ENCODE measurements at regions of chr2 and their contacts with region 1.

Region 1: GRCh38 chr2:70779911-70780545 is 10.4 kb downstream of the FIGLA start:
- DNase-seq: no peak
- ATAC-seq: no peak
- H3K4me3 ChIP-seq: no peak overlapping the region
- H3K27ac ChIP-seq: no peak overlapping the region
- H3K4me1 ChIP-seq: no peaks in the 10 kb centered on the region
- H3K27me3 ChIP-seq: peaks cover 0 to 51% (median 22%) of the 10 kb centered on the region in 7 donors
- CTCF ChIP-seq: no peak

Region 2: DNA sequence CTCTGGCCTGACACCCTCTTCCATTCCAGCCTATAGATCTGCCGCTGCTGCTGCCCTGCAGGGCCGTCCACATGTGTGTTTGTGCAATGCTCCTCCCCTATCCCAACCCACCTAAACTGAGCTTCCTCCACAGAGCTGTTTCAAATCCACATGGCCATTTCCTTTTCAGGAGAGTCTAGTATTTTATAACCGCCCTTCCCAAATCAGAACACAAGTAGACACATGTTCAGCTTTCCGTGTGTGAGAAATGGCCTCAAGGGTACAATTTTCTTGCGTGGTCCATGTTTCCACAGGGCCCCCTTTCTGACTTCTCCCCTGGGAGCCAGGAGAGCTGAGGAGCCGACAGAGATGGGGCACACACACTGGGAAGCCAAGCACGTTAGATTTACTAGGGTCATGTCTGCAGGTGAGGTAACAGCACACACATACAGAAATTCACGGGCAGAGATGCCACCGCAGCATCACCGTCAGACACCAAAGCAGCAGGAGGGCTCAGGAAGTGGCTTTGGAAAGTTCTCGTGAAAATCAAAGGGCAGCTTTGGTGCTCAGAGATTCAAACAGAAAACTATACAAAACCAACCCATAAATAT is 123.5 kb before region 1 on chr2:
- intact Hi-C with region 1: loop called in 6 of 10 experiments (anchors 5 to 10 kb)
- DNase-seq: no peak
- ATAC-seq: no peak
- H3K4me3 ChIP-seq: no peak overlapping the region
- H3K27ac ChIP-seq: no peak overlapping the region
- H3K4me1 ChIP-seq: no peaks in the 10 kb centered on the region
- H3K27me3 ChIP-seq: peaks cover 0 to 52% (median 29%) of the 10 kb centered on the region in 7 donors
- CTCF ChIP-seq: no peak

Region 3: DNA sequence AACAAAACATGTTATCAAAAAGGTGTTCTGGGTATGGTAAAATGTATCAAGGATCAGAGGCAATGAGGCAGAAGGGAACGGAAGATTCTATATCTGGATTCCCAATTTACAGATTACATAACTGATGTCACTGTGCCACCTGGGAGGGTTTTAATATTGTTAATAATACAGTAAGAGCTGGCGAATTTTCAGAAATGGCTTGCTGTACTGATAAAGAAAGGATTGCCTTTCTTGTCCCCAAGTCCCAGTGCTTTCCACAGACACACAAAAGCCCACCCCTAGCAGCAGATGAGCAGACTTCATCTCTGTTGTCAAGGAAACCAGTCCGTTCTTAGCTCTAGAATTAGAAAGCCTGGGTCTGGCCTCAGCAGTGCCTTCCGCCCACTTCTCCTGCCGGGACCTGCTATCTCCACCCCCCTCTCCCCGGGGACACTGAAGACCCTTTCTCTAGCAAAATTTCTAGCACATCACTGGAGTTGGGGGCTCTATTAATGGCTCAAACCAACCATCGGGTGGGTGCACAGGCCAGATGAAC is 46.3 kb before region 1 on chr2:
- intact Hi-C with region 1: no loop called
- DNase-seq: no peak
- ATAC-seq: no peak
- H3K4me3 ChIP-seq: no peak overlapping the region
- H3K27ac ChIP-seq: no peak overlapping the region
- H3K4me1 ChIP-seq: no peaks in the 10 kb centered on the region
- H3K27me3 ChIP-seq: peaks cover 0 to 22% (median 16%) of the 10 kb centered on the region in 7 donors
- CTCF ChIP-seq: no peak

Region 4: GRCh38 chr2:70817284-70817954 is 37.4 kb after region 1 on chr2:
- intact Hi-C with region 1: no loop called
- DNase-seq: no peak
- ATAC-seq: no peak
- H3K4me3 ChIP-seq: no peak overlapping the region
- H3K27ac ChIP-seq: no peak overlapping the region
- H3K4me1 ChIP-seq: no peaks in the 10 kb centered on the region
- H3K27me3 ChIP-seq: peaks cover 0 to 25% (median 11%) of the 10 kb centered on the region in 7 donors
- CTCF ChIP-seq: no peak

Region 5: GRCh38 chr2:71018625-71019024 is 238.6 kb after region 1 on chr2:
- intact Hi-C with region 1: no loop called
- DNase-seq: no peak
- ATAC-seq: no peak
- H3K4me3 ChIP-seq: no peak overlapping the region
- H3K27ac ChIP-seq: no peak overlapping the region
- H3K4me1 ChIP-seq: no peaks in the 10 kb centered on the region
- H3K27me3 ChIP-seq: peaks cover 0 to 11% (median 3%) of the 10 kb centered on the region in 7 donors
- CTCF ChIP-seq: no peak